A673 (cell line): ENCODE measurements at regions of chr11 and their contacts with region 1.

Region 1: GRCh38 chr11:122189229-122189628 is 73.2 kb upstream of the BLID start:
- DNase-seq: peak; percentile 88
- H3K4me3 ChIP-seq: no peak overlapping the region
- H3K27ac ChIP-seq: peak overlapping the region; percentile 28
- H3K4me1 ChIP-seq: peaks cover 9% of the 10 kb centered on the region
- H3K27me3 ChIP-seq: no peaks in the 10 kb centered on the region
- CTCF ChIP-seq: no peak

Region 2: GRCh38 chr11:121716060-121716459 is 473.2 kb before region 1 on chr11:
- CTCF ChIA-PET with region 1: no interaction called
- POLR2A ChIA-PET with region 1: no interaction called
- intact Hi-C with region 1: no loop called
- DNase-seq: peak; percentile 24
- H3K4me3 ChIP-seq: no peak overlapping the region
- H3K27ac ChIP-seq: no peak overlapping the region
- H3K4me1 ChIP-seq: peaks cover 7% of the 10 kb centered on the region
- H3K27me3 ChIP-seq: no peaks in the 10 kb centered on the region
- CTCF ChIP-seq: no peak

Region 3: GRCh38 chr11:122153746-122154145 is 35.5 kb before region 1 on chr11:
- CTCF ChIA-PET with region 1: no interaction called
- POLR2A ChIA-PET with region 1: interaction called, 17 read pairs
- intact Hi-C with region 1: no loop called
- DNase-seq: no peak
- H3K4me3 ChIP-seq: peak overlapping the region; percentile 49
- H3K27ac ChIP-seq: peak overlapping the region; percentile 81
- H3K4me1 ChIP-seq: peaks cover 28% of the 10 kb centered on the region
- H3K27me3 ChIP-seq: no peaks in the 10 kb centered on the region
- CTCF ChIP-seq: no peak

Region 4: GRCh38 chr11:122220321-122220720 is 31.1 kb after region 1 on chr11:
- CTCF ChIA-PET with region 1: no interaction called
- POLR2A ChIA-PET with region 1: no interaction called
- intact Hi-C with region 1: no loop called
- DNase-seq: no peak
- H3K4me3 ChIP-seq: no peak overlapping the region
- H3K27ac ChIP-seq: no peak overlapping the region
- H3K4me1 ChIP-seq: peaks cover 5% of the 10 kb centered on the region
- H3K27me3 ChIP-seq: no peaks in the 10 kb centered on the region
- CTCF ChIP-seq: no peak